WTC11 (cell line): ENCODE measurements at regions of chr19 and their contacts with region 1.

Region 1: DNA sequence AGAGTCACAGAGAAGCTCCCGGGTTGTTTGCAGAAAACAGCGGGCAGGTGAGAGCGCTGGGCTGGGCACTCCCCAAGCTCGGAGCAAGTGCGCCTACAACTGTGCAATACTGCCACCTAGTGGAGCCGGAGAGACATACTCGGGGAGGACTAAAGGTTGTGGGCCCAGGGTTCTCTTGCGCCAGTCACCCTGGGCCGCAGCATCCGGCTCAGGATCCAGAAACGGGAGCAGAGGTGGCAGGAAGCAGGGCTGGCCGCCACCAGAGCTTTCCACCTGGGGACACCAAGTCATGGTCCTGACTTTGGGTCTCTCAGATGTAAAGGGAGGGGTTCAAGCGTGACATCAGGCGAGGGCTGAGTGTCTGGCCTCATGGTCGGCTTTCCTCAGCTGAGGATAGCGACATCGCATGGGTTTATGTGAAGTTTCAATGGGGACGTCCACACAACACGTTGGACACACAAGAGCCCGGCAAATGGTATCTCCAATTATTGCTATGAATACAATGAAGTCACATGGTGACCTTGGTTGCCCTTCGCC is 11.2 kb upstream of the KLK4 start:
- DNase-seq: peak; percentile 87
- ATAC-seq: peak; percentile 100
- H3K4me3 Mint-ChIP-seq: peak overlapping the region; percentile 18; the same call in 1 of the 2 replicates
- H3K27ac Mint-ChIP-seq: no peak overlapping the region
- H3K4me1 Mint-ChIP-seq: peaks cover 13% of the 10 kb centered on the region
- H3K27me3 Mint-ChIP-seq: peaks cover 7% of the 10 kb centered on the region
- CTCF ChIP-seq: peak; percentile 90

Region 2: DNA sequence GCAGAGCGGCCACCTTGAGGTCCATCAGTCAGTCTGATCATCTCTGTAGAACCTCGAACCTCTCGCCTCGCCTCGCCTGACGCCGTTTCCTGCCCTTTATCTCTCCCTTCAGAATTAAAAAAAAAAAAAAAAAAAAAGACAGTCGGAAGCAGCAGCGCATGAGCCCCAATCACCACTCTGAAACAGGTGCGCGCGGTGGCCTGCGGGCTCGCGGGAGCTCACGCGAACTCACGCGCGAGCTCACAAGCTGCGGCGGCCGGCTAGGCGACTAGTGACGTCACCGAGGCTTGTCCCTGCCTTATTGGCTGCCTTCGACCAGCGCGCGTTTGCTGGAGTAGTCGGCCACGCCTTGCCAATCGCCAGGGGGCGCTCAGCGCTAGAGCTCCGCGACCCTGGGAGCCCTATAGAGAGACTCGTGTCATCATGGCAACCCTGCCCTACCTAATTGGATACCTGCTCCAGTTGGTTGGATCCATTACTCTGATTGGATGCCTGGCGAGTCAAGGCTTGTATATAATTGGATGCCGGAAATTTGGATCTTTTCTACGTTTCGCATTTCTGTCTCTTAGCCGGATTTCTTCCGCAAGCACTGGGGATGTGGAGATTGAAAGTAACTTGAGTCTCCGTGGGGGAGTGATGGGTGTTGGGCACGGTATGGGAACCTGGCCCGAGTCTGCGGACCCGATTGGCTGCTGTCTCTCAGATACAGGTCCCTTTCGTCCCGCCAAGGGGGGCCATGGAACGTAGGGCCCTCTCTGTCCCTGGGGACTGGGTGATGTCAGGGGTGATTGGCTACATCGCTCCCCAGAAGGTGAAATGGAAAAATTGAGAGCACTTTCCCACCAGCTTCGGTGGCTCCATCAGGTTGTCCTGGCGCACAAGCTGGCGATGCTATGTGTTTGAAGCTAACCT is 314.3 kb before region 1 on chr19:
- CTCF ChIA-PET with region 1: interaction called, 11 read pairs
- POLR2A ChIA-PET with region 1: no interaction called
- DNase-seq: peak; percentile 100
- ATAC-seq: peak; percentile 84
- H3K4me3 Mint-ChIP-seq: peak overlapping the region; percentile 62
- H3K27ac Mint-ChIP-seq: peak overlapping the region; percentile 83
- H3K4me1 Mint-ChIP-seq: peaks cover 12% of the 10 kb centered on the region; the same call in 1 of the 2 replicates
- H3K27me3 Mint-ChIP-seq: peaks cover 74% of the 10 kb centered on the region
- CTCF ChIP-seq: peak; percentile 66

Region 3: DNA sequence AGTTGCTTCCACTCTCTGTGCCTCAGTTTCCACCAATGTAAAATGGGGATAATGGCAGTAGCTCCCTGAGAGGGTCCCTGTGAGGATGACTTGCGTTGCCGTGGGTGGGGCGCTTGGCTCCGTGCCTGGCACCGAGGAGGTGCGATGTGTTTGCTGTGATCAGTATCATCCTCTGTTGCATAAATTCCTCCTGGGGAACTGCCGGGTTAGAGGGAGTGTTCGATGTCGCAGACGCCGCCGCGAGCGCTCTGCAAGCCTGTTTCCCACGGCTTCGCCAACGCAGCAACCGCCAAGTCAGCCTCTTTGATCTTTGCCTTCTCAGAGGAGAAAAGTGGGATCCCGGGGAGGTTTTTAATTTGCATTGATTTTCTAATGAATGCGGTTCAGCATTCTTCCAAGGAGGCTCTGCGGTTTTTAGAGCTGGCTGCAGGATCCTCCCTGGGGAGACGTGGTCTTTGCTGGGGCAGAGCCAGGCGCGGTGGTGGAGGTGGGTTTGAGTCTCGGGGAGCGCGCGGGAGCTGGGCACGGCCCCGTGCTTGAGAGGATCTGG is 144.6 kb before region 1 on chr19:
- CTCF ChIA-PET with region 1: interaction called, 19 read pairs
- POLR2A ChIA-PET with region 1: no interaction called
- DNase-seq: peak; percentile 71
- ATAC-seq: peak; percentile 54
- H3K4me3 Mint-ChIP-seq: peak overlapping the region; percentile 59
- H3K27ac Mint-ChIP-seq: 0 out of 2 replicates have a peak overlapping the region, but pooled peaks have one; percentile 51
- H3K4me1 Mint-ChIP-seq: peaks cover 24% of the 10 kb centered on the region
- H3K27me3 Mint-ChIP-seq: peaks cover 95% of the 10 kb centered on the region
- CTCF ChIP-seq: no peak

Region 4: DNA sequence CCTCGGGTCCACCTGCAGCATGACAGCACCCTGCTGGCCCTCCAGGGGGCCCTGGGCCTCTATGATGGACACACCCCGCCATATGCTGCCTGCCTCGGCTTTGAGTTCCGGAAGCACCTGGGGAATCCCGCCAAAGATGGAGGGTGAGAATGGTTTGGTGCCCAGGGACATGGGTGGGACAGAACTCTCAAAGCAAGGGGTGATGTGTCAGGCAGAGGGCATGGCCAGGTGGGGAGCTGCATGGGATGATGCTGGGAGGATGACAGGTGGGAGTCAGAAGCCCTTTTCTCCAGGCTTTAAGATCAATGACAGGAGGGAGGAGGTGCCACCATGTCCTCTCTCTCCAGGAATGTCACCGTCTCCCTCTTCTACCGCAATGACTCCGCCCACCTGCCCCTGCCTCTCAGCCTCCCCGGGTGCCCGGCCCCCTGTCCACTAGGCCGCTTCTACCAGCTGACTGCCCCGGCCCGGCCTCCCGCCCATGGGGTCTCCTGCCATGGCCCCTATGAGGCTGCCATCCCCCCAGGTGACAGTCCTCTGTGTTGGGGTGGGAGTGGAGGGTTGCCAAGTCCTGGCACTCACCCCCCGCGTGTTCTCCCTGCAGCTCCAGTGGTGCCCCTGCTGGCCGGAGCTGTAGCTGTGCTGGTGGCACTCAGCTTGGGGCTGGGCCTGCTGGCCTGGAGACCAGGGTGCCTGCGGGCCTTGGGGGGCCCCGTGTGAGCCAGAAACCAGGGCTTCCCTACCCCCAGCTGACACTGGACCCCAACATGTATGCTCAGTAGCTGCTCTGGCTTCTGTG is 127.7 kb before region 1 on chr19:
- CTCF ChIA-PET with region 1: interaction called, 38 read pairs
- POLR2A ChIA-PET with region 1: interaction called, 5 read pairs
- DNase-seq: peak; percentile 36
- ATAC-seq: peak; percentile 28
- H3K4me3 Mint-ChIP-seq: no peak overlapping the region
- H3K27ac Mint-ChIP-seq: peak overlapping the region; percentile 57; the same call in 1 of the 2 replicates
- H3K4me1 Mint-ChIP-seq: peaks cover 12% of the 10 kb centered on the region
- H3K27me3 Mint-ChIP-seq: peaks cover 19% of the 10 kb centered on the region
- CTCF ChIP-seq: no peak

Region 5: DNA sequence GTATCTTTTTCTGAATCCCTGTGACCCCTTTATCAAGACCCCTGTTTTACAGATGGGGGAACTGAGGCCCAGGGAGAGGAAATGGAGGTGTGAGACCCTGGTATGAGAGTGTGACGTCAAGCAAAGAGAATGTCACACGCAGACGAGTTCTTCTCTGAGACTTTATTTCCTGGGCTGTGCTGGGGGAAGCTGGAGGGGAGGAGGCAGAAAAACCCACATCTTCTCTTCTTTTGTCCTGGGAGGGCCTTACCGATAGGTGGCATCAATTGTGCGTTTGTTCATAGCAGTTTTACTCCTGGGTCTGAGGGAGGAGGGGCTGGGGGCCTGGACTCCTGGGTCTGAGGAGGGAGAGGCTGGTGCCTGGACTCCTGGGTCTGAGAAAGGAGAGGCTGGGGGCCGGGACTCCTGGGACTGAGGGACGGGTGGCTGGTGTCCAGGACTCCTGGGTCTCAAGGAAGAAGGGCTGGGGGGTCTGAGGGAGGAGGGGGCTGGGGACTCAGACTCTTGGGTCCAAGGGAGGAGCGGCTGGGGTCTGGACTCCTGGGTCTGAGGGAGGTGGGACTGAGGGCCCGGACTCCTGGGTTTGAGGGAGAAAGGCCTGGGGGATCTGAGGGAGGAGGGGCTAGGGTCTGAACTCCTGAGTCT is 84.0 kb before region 1 on chr19:
- CTCF ChIA-PET with region 1: interaction called, 16 read pairs
- POLR2A ChIA-PET with region 1: no interaction called
- DNase-seq: no peak
- ATAC-seq: peak; percentile 26
- H3K4me3 Mint-ChIP-seq: no peak overlapping the region
- H3K27ac Mint-ChIP-seq: no peak overlapping the region
- H3K4me1 Mint-ChIP-seq: peaks cover 18% of the 10 kb centered on the region
- H3K27me3 Mint-ChIP-seq: peaks cover 78% of the 10 kb centered on the region
- CTCF ChIP-seq: no peak

Region 6: DNA sequence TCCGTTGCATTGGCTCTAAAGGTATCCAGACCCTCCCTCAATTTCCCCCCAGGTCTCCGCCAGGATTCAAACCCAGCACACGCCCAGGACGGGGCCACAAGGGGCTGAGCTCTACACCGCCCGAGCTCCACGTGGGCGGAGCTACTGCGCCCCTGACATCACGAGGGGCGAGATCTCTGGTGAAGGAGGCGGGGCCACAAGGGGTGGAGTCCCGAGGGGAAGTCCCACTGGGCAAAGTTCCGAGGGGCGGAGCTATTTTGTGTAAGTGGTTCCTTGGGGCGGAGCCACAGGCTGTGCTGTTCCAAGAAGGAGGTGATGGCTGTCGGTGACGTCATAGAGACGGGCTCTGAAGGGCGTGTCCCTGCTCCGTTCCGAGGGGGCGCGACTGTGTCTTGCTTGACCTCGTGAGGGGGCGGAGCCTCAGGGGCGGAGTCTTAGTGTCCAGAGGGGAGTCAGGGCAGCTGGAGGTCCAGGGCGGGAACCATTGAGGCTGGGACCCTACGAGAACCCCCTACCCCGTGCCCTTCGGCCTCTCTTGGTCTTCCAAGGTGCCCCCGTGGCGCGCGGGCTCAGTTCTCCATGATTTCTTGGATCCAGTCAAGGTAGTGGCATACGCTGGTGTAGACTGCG is 80.3 kb after region 1 on chr19:
- CTCF ChIA-PET with region 1: interaction called, 17 read pairs
- POLR2A ChIA-PET with region 1: no interaction called
- DNase-seq: peak; percentile 97
- ATAC-seq: peak; percentile 81
- H3K4me3 Mint-ChIP-seq: peak overlapping the region; percentile 67
- H3K27ac Mint-ChIP-seq: peak overlapping the region; percentile 93
- H3K4me1 Mint-ChIP-seq: peaks cover 24% of the 10 kb centered on the region
- H3K27me3 Mint-ChIP-seq: peaks cover 52% of the 10 kb centered on the region
- CTCF ChIP-seq: no peak

Region 7: GRCh38 chr19:51097166-51097738 is 174.9 kb after region 1 on chr19:
- CTCF ChIA-PET with region 1: interaction called, 19 read pairs
- POLR2A ChIA-PET with region 1: no interaction called
- DNase-seq: peak; percentile 83
- ATAC-seq: peak; percentile 62
- H3K4me3 Mint-ChIP-seq: no peak overlapping the region
- H3K27ac Mint-ChIP-seq: no peak overlapping the region
- H3K4me1 Mint-ChIP-seq: peaks cover 15% of the 10 kb centered on the region
- H3K27me3 Mint-ChIP-seq: no peaks in the 10 kb centered on the region
- CTCF ChIP-seq: peak; percentile 80